ENCODE measurements at regions of chr5 and their contacts with region 1.

Region 1: DNA sequence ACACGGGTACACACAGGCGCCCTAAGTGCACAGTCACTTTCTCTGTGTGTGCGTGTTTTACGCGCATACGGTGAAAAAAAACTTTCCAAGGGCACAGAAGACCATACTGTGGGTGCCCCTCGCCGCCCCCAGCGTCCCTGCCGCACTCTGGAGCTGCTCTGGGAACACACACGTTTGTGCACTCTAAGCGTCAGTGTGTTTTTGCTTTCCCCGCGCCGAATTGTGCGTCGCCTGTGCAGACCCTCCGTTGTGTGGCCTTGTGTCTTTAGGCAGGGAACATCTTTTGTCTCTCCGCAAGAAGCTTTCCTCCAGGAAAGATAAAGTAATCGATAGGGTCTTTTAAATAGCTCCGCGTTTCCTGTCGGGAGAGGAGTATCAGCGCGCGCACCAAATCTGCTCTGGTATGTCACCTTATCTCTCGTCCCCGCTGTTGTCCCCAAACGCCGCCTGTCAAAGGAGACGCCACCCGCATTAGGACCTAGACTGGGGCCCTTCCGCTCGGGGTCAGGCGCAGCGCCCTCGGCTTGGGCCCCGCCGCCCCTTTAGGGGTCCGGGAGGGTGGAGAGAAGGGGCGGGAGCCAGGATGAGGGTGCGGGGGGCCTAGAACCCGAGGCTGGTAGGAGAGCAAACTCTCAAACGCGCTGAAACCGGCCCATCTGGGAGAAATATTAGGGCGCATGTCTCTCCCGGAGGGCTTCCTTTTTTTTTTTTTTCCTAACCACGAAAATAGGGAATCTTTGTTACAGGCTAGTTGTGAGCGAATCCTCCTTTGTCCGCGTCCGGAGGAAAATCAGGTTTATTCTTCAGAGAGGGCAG is 10.5 kb upstream of the NKX2-5 start:
- DNase-seq: no peak
- H3K4me3 Mint-ChIP-seq: no peak overlapping the region
- H3K27ac Mint-ChIP-seq: peak overlapping the region; percentile 30
- H3K4me1 Mint-ChIP-seq: peaks cover 12% of the 10 kb centered on the region
- H3K27me3 Mint-ChIP-seq: peaks cover 74% of the 10 kb centered on the region

Region 2: DNA sequence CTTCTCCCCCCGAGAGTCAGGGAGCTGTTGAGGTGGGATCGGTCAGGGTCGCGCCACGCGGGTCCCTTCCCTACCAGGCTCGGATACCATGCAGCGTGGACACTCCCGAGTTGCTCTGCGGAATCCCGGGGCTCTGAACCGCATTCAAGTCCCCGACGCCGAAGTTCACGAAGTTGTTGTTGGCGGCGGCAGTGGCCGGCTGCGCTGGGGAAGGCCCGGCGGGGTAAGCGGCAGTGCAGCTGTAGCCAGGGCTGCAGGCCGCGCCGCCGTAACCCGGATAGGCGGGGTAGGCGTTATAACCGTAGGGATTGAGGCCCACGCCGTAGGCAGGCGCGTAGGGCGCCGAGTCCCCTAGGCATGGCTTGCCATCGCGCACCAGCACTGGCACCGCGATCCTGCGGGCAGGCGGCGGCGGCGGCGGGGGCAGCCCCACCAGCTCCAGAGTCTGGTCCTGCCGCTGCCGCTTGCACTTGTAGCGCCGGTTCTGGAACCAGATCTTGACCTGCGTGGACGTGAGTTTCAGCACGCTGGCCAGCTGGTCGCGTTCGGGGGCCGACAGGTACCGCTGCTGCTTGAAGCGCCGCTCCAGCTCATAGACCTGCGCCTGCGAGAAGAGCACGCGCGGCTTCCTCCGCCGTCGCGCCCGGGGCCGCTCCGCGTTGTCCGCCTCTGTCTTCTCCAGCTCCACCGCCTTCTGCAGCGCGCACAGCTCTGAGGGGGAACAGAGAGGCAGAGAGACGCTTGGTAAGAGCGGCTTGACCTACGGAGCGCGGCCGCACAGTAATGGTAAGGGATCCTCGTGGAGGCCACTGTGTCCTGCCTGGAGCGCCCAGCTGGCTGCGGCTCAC is 12.8 kb before region 1 on chr5:
- CTCF ChIA-PET with region 1: no interaction called
- POLR2A ChIA-PET with region 1: interaction called, 3 read pairs
- intact Hi-C with region 1: loop called (anchors 1 kb)
- DNase-seq: no peak
- H3K4me3 Mint-ChIP-seq: peak overlapping the region; percentile 29
- H3K27ac Mint-ChIP-seq: no peak overlapping the region
- H3K4me1 Mint-ChIP-seq: peaks cover 46% of the 10 kb centered on the region
- H3K27me3 Mint-ChIP-seq: peaks cover 90% of the 10 kb centered on the region

Region 3: DNA sequence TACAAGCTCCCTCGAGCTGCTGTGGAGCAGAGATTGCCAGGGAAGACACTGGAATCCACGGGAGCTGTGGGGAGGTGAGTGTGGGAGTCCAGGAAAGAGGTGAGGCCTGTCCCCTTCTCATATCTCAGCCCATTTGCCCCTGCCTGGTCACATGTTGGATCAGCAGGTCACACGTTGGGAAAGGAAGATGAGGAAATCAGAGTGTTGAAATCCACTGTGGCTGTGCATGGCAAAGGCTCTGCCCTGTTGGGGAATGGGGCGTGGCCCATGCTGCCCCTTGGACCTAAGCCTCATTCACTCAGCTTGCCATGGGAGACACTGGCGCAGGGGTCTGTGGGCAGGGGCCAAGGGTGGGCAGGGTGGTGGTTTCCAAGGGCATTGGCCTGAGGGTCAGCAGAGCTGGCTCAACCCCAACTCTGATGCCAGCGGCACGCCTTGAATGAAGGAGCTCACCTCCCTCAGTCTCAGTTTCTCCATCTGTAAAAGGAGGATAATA is 557.2 kb after region 1 on chr5:
- CTCF ChIA-PET with region 1: no interaction called
- POLR2A ChIA-PET with region 1: no interaction called
- intact Hi-C with region 1: no loop called
- DNase-seq: no peak
- H3K4me3 Mint-ChIP-seq: no peak overlapping the region
- H3K27ac Mint-ChIP-seq: no peak overlapping the region
- H3K4me1 Mint-ChIP-seq: no peaks in the 10 kb centered on the region
- H3K27me3 Mint-ChIP-seq: no peaks in the 10 kb centered on the region